ENCODE measurements at regions of chr1 and their contacts with region 1.

Region 1: GRCh38 chr1:156368889-156369684 is at the start of gene RHBG:
- DNase-seq: peak; percentile 48
- ATAC-seq: peak; percentile 20
- H3K4me3 ChIP-seq: peak within 1 kb of the TSS; percentile 70 to 91 (median 90)
- H3K27ac ChIP-seq: peak within 1 kb of the TSS; percentile 98
- H3K4me1 ChIP-seq: peaks cover 87% of the 10 kb centered on the region
- H3K27me3 ChIP-seq: no peaks in the 10 kb centered on the region; a peak in 1 of 5 replicates
- CTCF ChIP-seq: no peak
- EP300 ChIP-seq: no peak
- POLR2A ChIP-seq: peak; percentile 86 to 98
- RAD21 ChIP-seq: no peak
- total RNA-seq, gene RHBG: 19.9 and 73.5 TPM in 2 replicates

Region 2: GRCh38 chr1:156104065-156104810 is 264.8 kb before region 1 on chr1:
- CTCF ChIA-PET with region 1: no interaction called
- POLR2A ChIA-PET with region 1: no interaction called
- in situ Hi-C with region 1: no loop called
- intact Hi-C with region 1: no loop called
- DNase-seq: peak; percentile 50
- ATAC-seq: peak; percentile 49
- H3K4me3 ChIP-seq: peak overlapping the region in 1 of 3 experiments; percentile 74; a peak in 2 of 6 replicates
- H3K27ac ChIP-seq: peak overlapping the region; percentile 69
- H3K4me1 ChIP-seq: peaks cover 95% of the 10 kb centered on the region
- H3K27me3 ChIP-seq: 0 out of 5 replicates have a peak, but pooled peaks cover 0 to 8% of the 10 kb centered on the region in 2 experiments
- CTCF ChIP-seq: no peak
- EP300 ChIP-seq: no peak
- POLR2A ChIP-seq: no peak
- RAD21 ChIP-seq: no peak

Region 3: DNA sequence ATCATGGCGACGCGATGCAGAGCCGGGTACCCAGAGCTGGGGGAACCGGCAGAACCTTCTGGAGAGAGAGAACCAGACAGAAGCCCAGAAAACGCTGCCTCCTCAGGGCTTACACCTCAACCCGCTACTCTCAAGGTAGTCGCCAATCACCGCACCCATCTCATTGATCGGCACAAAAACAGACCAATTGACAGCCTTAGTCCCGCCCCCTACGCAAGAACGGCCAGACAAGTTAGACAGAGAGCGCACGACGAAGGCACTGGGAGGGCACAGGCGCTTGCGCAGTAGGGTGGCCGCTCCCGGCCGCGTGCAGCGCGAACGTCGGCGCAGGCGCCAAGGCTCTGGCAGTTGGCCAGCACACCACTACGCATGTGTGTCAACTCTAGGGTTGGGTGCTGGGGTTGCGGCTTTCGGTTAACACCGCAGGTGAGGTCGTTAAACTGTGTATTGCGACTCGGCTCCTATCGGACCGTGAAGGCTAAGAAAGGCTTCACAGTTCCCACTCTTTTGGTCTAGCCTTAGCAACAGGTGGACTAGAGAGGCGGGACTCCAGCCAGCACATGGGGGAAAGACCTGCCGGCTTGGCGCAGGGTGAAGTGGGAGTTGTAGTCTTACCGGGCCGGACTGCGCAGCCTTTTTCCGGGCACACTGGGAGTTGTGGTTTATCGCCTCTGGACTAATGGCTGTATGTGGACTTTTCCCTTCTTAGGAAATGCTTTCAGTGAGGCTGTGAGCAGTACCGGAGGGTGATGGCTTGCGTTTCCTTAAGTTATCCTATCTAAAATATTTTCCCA is 30.7 kb before region 1 on chr1 and contains the starts of genes CCT3 and TSACC:
- CTCF ChIA-PET with region 1: no interaction called
- POLR2A ChIA-PET with region 1: interaction called, 22 read pairs
- in situ Hi-C with region 1: no loop called
- intact Hi-C with region 1: loop called (anchors 5 kb)
- DNase-seq: peak; percentile 99
- ATAC-seq: peak; percentile 94
- H3K4me3 ChIP-seq: peak within 1 kb of the TSS; percentile 87 to 94 (median 92)
- H3K27ac ChIP-seq: peak within 1 kb of the TSS; percentile 85
- H3K4me1 ChIP-seq: peaks cover 25% of the 10 kb centered on the region
- H3K27me3 ChIP-seq: no peaks in the 10 kb centered on the region; a peak in 1 of 5 replicates
- CTCF ChIP-seq: no peak
- EP300 ChIP-seq: 0 out of 4 replicates have a peak, but pooled peaks of 1 of the 2 experiments have one; percentile 29
- POLR2A ChIP-seq: peak; percentile 78 to 88
- RAD21 ChIP-seq: peak; percentile 5; the same call in 1 of the 2 replicates
- total RNA-seq, gene CCT3: 615 and 870 TPM in 2 replicates
- total RNA-seq, gene TSACC: 1.6 and 2.6 TPM in 2 replicates

Region 4: DNA sequence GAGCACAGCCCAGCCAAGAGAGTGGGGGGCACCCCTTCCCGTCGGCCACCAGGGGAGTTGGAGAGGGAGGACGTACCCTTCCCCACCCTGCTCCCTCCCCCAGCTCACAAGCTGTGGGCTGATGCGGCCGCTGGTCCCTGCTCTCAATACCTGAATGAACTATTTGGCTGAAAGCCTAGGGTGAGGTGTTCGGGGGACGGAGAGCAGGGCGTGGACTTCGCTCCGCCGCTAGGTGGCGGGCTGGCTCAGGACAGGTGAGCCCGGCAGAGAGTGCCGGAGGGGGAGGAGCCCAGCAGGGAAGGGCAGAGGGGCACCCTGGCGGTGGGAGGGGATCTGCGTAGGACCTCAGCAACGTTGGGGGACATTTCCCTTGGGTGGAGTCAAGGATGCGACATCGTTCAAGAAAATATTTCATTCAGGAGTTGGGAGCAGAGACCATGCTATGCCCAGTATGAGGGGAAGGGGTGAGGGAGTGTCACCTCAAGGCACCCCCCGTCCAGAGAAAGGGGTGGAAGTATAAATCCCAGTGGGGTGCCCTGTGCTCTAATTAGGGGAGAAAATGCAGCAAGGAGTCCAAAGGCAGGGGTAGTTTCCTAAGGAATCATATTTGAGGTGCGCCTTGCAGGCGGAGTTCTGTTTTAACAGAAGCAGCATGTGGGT is 12.1 kb before region 1 on chr1:
- CTCF ChIA-PET with region 1: interaction called, 3 read pairs
- POLR2A ChIA-PET with region 1: interaction called, 46 read pairs
- in situ Hi-C with region 1: no loop called
- intact Hi-C with region 1: no loop called
- DNase-seq: peak; percentile 73
- ATAC-seq: peak; percentile 98
- H3K4me3 ChIP-seq: peak overlapping the region in 2 of 3 experiments; percentile 13 to 47; a peak in 2 of 6 replicates
- H3K27ac ChIP-seq: no peak overlapping the region
- H3K4me1 ChIP-seq: peaks cover 44% of the 10 kb centered on the region
- H3K27me3 ChIP-seq: no peaks in the 10 kb centered on the region
- CTCF ChIP-seq: peak; percentile 100
- EP300 ChIP-seq: no peak
- POLR2A ChIP-seq: no peak
- RAD21 ChIP-seq: peak; percentile 93

Region 5: DNA sequence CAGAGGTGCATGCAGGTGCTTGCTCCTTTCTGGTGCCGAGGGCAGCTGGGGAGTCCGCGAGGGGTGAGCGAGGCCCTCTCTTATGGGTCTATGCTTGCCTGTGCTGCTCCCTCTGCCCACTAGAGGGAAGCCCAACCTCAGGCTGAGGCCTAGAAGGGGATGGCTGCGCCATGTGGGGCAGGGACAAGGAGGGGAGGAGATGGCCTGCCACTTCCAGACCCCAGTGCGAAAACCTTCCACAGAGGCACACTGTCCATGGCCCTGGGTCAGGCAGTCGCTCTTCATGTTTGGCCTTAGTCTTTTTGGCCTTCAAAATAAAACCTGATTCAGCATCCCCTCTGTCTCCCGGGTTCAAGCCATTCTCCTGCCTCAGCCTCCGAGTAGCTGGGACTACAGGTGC is 13.9 kb after region 1 on chr1:
- CTCF ChIA-PET with region 1: no interaction called
- POLR2A ChIA-PET with region 1: interaction called, 189 read pairs
- in situ Hi-C with region 1: no loop called
- intact Hi-C with region 1: no loop called
- DNase-seq: peak; percentile 49
- ATAC-seq: peak; percentile 71
- H3K4me3 ChIP-seq: no peak overlapping the region
- H3K27ac ChIP-seq: no peak overlapping the region
- H3K4me1 ChIP-seq: peaks cover 32% of the 10 kb centered on the region
- H3K27me3 ChIP-seq: no peaks in the 10 kb centered on the region
- CTCF ChIP-seq: peak; percentile 87
- EP300 ChIP-seq: no peak
- POLR2A ChIP-seq: peak in 1 of 2 experiments; percentile 35; a peak in 1 of 4 replicates
- RAD21 ChIP-seq: peak; percentile 75

Region 6: DNA sequence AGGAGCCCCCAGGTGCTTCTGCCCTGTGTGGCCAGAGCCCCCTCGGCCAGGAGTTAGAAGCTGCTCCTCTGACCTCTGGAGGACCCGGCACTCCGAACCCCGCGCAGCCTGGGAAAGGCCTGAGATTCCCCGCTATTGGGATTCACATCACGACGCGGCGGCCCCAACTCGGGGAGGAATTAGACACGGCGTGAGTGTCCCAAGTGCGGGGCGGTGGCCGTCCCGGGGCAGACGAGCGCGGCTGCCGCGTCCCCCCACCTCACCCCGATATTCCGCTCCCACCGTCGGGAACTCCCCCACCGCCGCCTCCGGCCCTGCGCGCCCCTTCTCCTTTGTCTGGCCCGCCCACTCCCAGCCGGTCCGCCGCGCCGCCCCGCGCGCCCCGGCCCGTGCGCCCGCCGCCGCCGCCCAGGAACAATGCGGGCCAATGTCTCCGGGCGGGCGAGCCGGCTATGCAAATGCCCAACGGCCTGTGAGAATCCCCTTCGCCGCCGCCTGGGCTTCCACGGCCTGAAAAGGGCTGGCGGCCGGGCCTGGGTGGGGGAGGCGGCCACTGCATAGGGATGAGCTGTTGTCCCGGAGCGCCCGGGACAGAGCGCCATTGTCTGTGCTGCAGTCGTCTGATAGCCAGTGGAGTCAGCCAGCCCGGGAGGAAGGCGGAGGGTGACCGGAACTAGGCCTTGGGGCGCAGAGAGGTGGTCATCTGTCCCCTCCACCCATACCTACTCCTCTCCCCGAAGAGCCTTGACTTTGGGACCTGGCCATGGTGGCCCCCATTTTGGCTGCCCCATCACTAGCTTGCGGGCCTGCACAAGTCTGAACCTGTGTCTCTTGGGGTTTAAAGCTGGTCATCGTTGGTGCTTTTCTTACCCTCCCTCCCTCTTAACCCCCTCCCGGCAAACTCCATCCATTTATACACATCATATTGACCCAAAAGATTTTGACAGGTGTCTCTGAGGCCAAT is 19.4 kb after region 1 on chr1:
- CTCF ChIA-PET with region 1: no interaction called
- POLR2A ChIA-PET with region 1: interaction called, 189 read pairs
- in situ Hi-C with region 1: no loop called
- intact Hi-C with region 1: no loop called
- DNase-seq: peak; percentile 61
- ATAC-seq: peak; percentile 39
- H3K4me3 ChIP-seq: peak overlapping the region; percentile 41 to 68 (median 47)
- H3K27ac ChIP-seq: no peak overlapping the region
- H3K4me1 ChIP-seq: peaks cover 39% of the 10 kb centered on the region
- H3K27me3 ChIP-seq: peaks cover 10 to 42% of the 10 kb centered on the region in 2 experiments; a peak in 4 of 5 replicates
- CTCF ChIP-seq: 0 out of 2 replicates have a peak, but pooled peaks have one; percentile 7
- EP300 ChIP-seq: no peak
- POLR2A ChIP-seq: 0 out of 4 replicates have a peak, but pooled peaks of 1 of the 2 experiments have one; percentile 21
- RAD21 ChIP-seq: no peak

Region 7: DNA sequence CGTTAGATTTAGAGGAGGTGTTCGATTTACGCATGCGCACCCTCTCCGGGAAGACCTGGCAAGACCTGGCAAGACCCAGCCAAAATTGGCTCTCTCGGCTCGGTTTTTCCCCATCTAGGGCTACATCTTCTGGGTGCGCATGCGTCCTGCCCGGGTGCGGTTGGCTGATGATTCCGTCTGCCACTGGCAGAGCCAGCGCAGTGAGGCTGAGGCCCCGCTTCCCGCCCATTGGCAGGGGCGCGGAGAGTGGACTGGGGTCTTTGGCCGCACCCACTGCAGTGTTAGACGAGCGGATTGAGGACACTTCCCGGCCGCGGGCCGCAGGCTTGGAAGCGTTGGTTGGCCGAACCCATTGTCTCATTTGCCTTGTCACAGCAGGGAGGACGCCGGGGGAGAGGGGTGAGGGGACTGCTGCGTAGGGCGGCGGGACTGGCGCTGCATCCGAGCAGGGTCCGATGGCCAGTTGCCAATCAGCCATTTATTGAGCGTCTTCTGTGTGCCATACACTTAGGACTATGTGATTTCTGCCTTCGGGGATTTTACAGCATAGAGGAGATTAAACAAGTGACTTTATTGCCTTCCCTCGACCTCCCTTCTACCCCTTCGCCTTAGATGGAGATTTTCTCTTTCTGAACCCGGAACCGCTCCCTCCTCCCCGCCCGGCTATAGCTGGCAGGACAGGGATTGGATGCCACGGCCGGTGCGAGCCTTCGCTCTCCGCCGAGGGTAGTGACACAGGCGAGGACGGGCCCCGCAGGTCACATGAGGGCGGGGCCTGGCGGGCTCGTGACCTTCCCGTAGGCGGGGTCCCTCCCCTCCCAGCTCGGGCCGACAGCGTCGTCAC is 87.8 kb after region 1 on chr1:
- CTCF ChIA-PET with region 1: no interaction called
- POLR2A ChIA-PET with region 1: interaction called, 17 read pairs
- in situ Hi-C with region 1: no loop called
- intact Hi-C with region 1: no loop called
- DNase-seq: peak; percentile 96
- ATAC-seq: peak; percentile 91
- H3K4me3 ChIP-seq: peak overlapping the region; percentile 54 to 75 (median 55); a peak in 5 of 6 replicates
- H3K27ac ChIP-seq: peak overlapping the region; percentile 85
- H3K4me1 ChIP-seq: peaks cover 60% of the 10 kb centered on the region
- H3K27me3 ChIP-seq: no peaks in the 10 kb centered on the region
- CTCF ChIP-seq: no peak
- EP300 ChIP-seq: no peak; a peak in 1 of 4 replicates
- POLR2A ChIP-seq: peak; percentile 60 to 64
- RAD21 ChIP-seq: peak; percentile 3; the same call in 1 of the 2 replicates

Region 8: DNA sequence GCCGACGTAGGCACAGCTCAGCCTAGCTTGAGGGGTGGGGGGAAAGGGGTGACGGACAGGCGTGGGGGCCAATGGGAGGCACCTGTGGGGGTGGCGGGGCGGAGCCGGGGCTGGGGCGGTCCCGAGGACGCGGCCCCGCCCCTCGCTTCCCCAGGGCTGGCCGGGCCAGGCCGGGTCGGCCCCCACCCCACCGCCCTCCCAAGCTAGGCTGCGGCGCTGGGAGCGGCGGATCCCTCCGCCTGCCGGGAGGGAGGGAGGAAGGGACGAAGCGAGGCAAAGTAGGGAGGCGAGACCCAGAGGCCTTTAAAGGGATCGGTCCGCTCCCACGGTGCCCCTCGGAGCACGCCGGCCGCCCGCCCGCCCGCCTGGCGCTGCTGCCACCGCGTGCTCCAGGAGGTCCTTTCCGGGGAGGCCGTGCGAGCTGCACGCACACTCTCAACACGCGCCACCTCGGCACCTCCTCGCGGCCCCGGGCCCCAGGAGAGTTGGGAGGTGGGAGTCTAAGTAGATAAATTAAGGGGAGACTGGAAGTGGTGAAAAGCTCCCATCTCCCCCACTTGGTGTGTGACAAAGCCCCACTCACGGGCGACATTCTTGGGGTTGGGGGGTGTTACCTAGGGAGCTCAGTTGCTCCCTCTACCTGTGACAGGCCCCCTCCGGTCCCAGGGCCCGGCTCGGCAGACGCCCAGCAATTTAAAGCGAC is 131.9 kb after region 1 on chr1:
- CTCF ChIA-PET with region 1: no interaction called
- POLR2A ChIA-PET with region 1: interaction called, 12 read pairs
- in situ Hi-C with region 1: no loop called
- intact Hi-C with region 1: no loop called
- DNase-seq: peak; percentile 80
- ATAC-seq: peak; percentile 80
- H3K4me3 ChIP-seq: peak overlapping the region; percentile 75 to 97 (median 94)
- H3K27ac ChIP-seq: peak overlapping the region; percentile 89
- H3K4me1 ChIP-seq: peaks cover 81% of the 10 kb centered on the region
- H3K27me3 ChIP-seq: peaks cover 2 to 20% of the 10 kb centered on the region in 2 experiments; a peak in 4 of 5 replicates
- CTCF ChIP-seq: peak; percentile 75
- EP300 ChIP-seq: no peak
- POLR2A ChIP-seq: peak; percentile 67 to 71
- RAD21 ChIP-seq: no peak; the same call in 1 of the 2 replicates